Natural killer cell (primary cell): ENCODE measurements at regions of chr2 and their contacts with region 1.

Region 1: GRCh38 chr2:47906157-47907038 is at the start of gene FBXO11:
- DNase-seq: peak; percentile 90 to 97
- ATAC-seq: peak; percentile 80 to 94 (median 82)
- H3K4me3 ChIP-seq: peak within 1 kb of the TSS; percentile 89
- H3K4me3 Mint-ChIP-seq: peak within 1 kb of the TSS; percentile 95
- H3K27ac ChIP-seq: peak within 1 kb of the TSS; percentile 97
- H3K27ac Mint-ChIP-seq: peak within 1 kb of the TSS; percentile 93 to 98
- H3K4me1 ChIP-seq: peaks cover 7% of the 10 kb centered on the region
- H3K4me1 Mint-ChIP-seq: peaks cover 41 to 44% of the 10 kb centered on the region in 2 donors
- H3K27me3 ChIP-seq: no peaks in the 10 kb centered on the region
- H3K27me3 Mint-ChIP-seq: no peaks in the 10 kb centered on the region
- CTCF ChIP-seq: peak; percentile 60
- total RNA-seq, gene FBXO11: 104 to 110 (median 105) TPM

Region 2: DNA sequence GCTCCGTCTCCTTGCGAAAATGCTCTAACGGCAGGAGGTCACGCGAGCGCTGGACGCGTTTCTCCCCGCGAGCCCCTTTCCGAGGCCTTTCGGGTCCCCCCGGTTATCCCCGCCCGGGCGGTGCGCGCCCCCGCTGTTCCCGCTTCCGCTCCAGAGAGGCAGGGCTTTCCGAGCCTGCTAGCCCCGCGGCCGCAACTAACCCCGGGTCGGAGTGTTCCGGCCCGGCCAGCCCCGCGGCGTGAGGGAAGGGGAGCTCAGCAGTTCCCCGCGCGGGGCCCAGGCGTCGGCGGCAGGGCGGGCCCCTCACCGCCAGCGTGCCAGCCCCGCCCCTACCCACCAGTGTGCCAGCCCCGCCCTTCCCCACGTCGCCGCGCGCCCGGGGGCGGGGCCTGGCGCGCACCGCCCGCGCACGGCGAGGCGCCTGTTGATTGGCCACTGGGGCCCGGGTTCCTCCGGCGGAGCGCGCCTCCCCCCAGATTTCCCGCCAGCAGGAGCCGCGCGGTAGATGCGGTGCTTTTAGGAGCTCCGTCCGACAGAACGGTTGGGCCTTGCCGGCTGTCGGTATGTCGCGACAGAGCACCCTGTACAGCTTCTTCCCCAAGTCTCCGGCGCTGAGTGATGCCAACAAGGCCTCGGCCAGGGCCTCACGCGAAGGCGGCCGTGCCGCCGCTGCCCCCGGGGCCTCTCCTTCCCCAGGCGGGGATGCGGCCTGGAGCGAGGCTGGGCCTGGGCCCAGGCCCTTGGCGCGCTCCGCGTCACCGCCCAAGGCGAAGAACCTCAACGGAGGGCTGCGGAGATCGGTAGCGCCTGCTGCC is 123.5 kb before region 1 on chr2 and contains the start of gene MSH6:
- intact Hi-C with region 1: loop called (anchors 2 kb)
- DNase-seq: peak; percentile 88 to 96
- ATAC-seq: peak; percentile 94 to 99 (median 94)
- H3K4me3 ChIP-seq: peak within 1 kb of the TSS; percentile 79
- H3K4me3 Mint-ChIP-seq: peak within 1 kb of the TSS; percentile 94
- H3K27ac ChIP-seq: peak within 1 kb of the TSS; percentile 77
- H3K27ac Mint-ChIP-seq: peak within 1 kb of the TSS; percentile 72 to 84
- H3K4me1 ChIP-seq: peaks cover 14% of the 10 kb centered on the region
- H3K4me1 Mint-ChIP-seq: peaks cover 16 to 22% of the 10 kb centered on the region in 2 donors
- H3K27me3 ChIP-seq: no peaks in the 10 kb centered on the region
- H3K27me3 Mint-ChIP-seq: peaks cover 0 to under 1% of the 10 kb centered on the region in 2 donors
- CTCF ChIP-seq: no peak
- total RNA-seq, gene MSH6: 18.5 to 35.5 (median 26.2) TPM

Region 3: GRCh38 chr2:47888581-47889280 is 17.7 kb before region 1 on chr2:
- intact Hi-C with region 1: loop called (anchors 1 kb)
- DNase-seq: peak in 1 of 2 donors; percentile 77
- ATAC-seq: peak; percentile 86 to 97 (median 95)
- H3K4me3 ChIP-seq: no peak overlapping the region
- H3K4me3 Mint-ChIP-seq: peak overlapping the region; percentile 79
- H3K27ac ChIP-seq: peak overlapping the region; percentile 74
- H3K27ac Mint-ChIP-seq: peak overlapping the region; percentile 90 to 96
- H3K4me1 ChIP-seq: peaks cover 20% of the 10 kb centered on the region
- H3K4me1 Mint-ChIP-seq: peaks cover 52 to 62% of the 10 kb centered on the region in 2 donors
- H3K27me3 ChIP-seq: no peaks in the 10 kb centered on the region
- H3K27me3 Mint-ChIP-seq: no peaks in the 10 kb centered on the region
- CTCF ChIP-seq: no peak

Region 4: GRCh38 chr2:48107326-48107925 is 201.0 kb after region 1 on chr2:
- intact Hi-C with region 1: loop called (anchors 2 kb)
- DNase-seq: no peak
- ATAC-seq: no peak
- H3K4me3 ChIP-seq: no peak overlapping the region
- H3K4me3 Mint-ChIP-seq: no peak overlapping the region
- H3K27ac ChIP-seq: no peak overlapping the region
- H3K27ac Mint-ChIP-seq: no peak overlapping the region
- H3K4me1 ChIP-seq: peaks cover 18% of the 10 kb centered on the region
- H3K4me1 Mint-ChIP-seq: peaks cover 18 to 19% of the 10 kb centered on the region in 2 donors
- H3K27me3 ChIP-seq: no peaks in the 10 kb centered on the region
- H3K27me3 Mint-ChIP-seq: peaks cover 2 to 6% of the 10 kb centered on the region in 2 donors
- CTCF ChIP-seq: no peak

Region 5: DNA sequence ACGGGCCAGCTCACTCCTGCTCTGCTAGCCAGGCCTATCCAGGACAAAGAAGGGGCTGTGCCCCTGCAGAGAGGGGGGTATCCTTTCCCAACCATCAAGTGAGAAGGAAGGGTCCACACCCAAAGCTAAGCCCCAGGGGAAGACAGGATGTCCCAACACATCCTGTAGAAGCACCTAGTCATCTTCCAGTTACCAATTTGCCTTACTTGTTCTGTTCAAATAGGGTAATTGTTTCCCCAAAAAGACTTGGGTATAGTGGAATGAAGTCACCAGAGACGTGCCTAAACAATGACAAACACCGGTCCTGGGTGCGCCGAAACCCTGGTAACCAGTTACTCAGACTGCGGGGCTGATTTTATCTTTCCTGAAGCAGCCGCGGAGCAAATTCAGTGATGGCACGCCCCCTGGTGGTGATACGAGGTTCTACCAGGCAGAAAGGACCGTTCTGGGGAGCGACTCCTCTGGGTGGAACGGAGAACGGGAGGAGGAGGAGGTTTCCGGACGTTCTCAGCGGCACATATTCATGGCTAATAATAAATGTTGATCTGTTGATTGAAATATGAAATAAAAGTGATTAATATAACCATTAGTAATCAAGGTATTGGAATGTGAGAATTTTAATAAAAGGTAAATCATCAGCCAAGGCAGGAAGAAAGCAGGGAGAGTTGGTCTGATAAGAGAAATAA is 514.3 kb after region 1 on chr2:
- intact Hi-C with region 1: loop called (anchors 5 kb)
- DNase-seq: peak; percentile 87 to 94
- ATAC-seq: peak; percentile 93 to 97 (median 93)
- H3K4me3 ChIP-seq: no peak overlapping the region
- H3K4me3 Mint-ChIP-seq: no peak overlapping the region
- H3K27ac ChIP-seq: no peak overlapping the region
- H3K27ac Mint-ChIP-seq: peak overlapping the region in 1 of 2 donors; percentile 55
- H3K4me1 ChIP-seq: peaks cover 14% of the 10 kb centered on the region
- H3K4me1 Mint-ChIP-seq: peaks cover 13 to 16% of the 10 kb centered on the region in 2 donors
- H3K27me3 ChIP-seq: no peaks in the 10 kb centered on the region
- H3K27me3 Mint-ChIP-seq: peaks cover 9 to 36% of the 10 kb centered on the region in 2 donors
- CTCF ChIP-seq: peak; percentile 98